Thyroid gland (tissue), 4 donors: ENCODE measurements at regions of chr14 and their contacts with region 1.

Region 1: DNA sequence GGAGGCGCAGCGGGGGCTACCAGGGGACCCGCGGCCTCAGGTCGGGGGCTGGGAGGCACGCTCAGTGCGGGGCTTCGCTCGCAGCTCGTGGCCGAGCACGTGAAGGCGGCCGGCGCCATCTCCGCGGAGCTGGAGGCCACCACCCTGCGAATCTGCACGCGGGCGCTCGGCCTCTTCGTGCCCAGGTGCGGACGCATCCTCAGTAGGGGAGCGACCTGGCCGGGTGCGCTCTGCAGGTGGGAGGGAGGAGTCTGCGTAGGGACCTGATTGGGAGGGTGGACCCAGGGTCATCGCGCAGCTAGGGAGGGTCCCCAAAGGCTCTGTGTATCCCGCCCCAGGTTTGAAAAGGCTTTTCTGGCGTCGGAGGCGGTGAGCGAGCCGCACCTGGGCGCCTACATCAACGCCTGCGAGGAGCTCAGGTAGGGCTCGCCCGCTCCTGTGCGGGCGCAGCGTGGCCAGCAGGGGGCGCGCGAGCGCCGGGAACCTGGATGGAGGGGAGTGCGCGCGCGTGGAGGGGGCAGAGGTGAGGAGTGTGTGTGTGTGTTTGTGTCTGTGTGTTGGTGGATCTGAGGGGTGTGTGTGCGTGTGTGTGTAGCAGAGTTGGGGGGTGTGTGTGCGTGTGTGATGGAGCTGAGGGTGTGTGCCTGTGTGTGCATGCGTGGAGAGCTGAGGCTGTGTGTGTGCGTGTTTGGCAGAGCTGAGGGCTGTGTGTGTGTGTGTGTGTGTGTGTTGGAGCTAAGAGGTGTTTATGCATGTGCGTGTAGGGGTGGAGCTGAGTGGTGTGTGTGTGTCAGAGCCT is 10.3 kb downstream of the EXOC3L4 start:
- DNase-seq: peak; percentile 64 to 76
- H3K4me3 ChIP-seq: no peak overlapping the region
- H3K27ac ChIP-seq: no peak overlapping the region
- H3K4me1 ChIP-seq: peaks cover 0 to 33% of the 10 kb centered on the region in 2 donors
- H3K27me3 ChIP-seq: peaks cover 9% of the 10 kb centered on the region
- CTCF ChIP-seq: peak; percentile 76 to 99 (median 94)
- POLR2A ChIP-seq: no peak

Region 2: GRCh38 chr14:102717276-102717675 is 387.6 kb before region 1 on chr14:
- intact Hi-C with region 1: no loop called
- DNase-seq: no peak
- H3K4me3 ChIP-seq: no peak overlapping the region
- H3K27ac ChIP-seq: no peak overlapping the region
- H3K4me1 ChIP-seq: no peaks in the 10 kb centered on the region
- H3K27me3 ChIP-seq: no peaks in the 10 kb centered on the region
- CTCF ChIP-seq: no peak
- POLR2A ChIP-seq: no peak

Region 3: GRCh38 chr14:103141119-103141796 is 36.4 kb after region 1 on chr14:
- intact Hi-C with region 1: loop called (anchors 5 kb)
- DNase-seq: peak; percentile 43 to 53
- H3K4me3 ChIP-seq: no peak overlapping the region
- H3K27ac ChIP-seq: no peak overlapping the region
- H3K4me1 ChIP-seq: peaks cover 5 to 21% of the 10 kb centered on the region in 2 donors
- H3K27me3 ChIP-seq: no peaks in the 10 kb centered on the region
- CTCF ChIP-seq: peak in 5 of 6 experiments; percentile 25 to 68 (median 54)
- POLR2A ChIP-seq: no peak

Region 4: GRCh38 chr14:103185051-103185992 is 80.5 kb after region 1 on chr14:
- intact Hi-C with region 1: loop called (anchors 2 kb)
- DNase-seq: no peak
- H3K4me3 ChIP-seq: no peak overlapping the region
- H3K27ac ChIP-seq: no peak overlapping the region
- H3K4me1 ChIP-seq: peaks cover 4 to 11% of the 10 kb centered on the region in 2 donors
- H3K27me3 ChIP-seq: no peaks in the 10 kb centered on the region
- CTCF ChIP-seq: peak; percentile 30 to 77 (median 72)
- POLR2A ChIP-seq: no peak